ENCODE measurements at regions of chr1 and their contacts with region 1.

Region 1: GRCh38 chr1:1059494-1060280 is 14.4 kb downstream of the RNF223 start:
- DNase-seq: peak; percentile 86 to 95 (median 87)
- ATAC-seq: peak; percentile 66 to 94 (median 86)
- H3K4me3 ChIP-seq: peak overlapping the region; percentile 37 to 70 (median 58)
- H3K27ac ChIP-seq: peak overlapping the region in 1 of 12 donors; percentile 24
- H3K4me1 ChIP-seq: peaks cover 0 to 42% (median 18%) of the 10 kb centered on the region in 12 donors
- H3K27me3 ChIP-seq: peaks cover 28 to 69% (median 46%) of the 10 kb centered on the region in 9 donors
- CTCF ChIP-seq: peak in 2 of 12 donors; percentile 4
- POLR2A ChIP-seq: no peak

Region 2: DNA sequence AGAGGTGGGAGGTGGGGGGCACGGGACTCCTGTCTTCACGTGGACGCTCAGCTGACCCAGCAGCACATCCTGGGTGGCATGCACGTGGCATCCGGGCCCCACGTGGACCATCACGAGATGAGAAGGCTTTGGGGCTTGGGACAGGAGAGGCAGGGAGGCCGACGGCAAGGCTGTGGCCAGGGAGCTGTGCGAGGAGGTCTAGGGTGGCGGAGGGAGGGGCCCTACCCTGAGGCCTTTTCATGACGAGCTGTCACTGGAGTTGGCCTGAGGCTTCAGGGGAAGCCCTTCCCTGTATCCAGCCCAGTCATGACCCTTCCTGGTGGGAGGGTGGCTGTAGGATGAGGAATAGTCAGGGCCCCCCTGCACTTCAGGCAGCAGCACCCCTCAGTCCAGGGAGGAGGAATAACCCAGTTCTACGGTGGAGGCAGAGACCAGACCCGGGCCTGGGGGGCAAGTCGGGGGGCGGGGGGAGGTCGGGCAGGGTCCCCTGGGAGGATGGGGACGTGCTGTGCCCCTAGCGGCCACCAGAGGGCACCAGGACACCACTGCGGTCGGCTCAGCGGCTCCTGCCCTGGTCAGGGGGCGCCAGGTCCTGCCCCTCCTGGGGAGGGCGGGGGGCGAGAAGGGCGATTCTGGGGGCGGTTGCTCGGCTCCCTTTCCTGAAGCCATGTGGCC is 75.8 kb before region 1 on chr1:
- intact Hi-C with region 1: loop called (anchors 1 to 5 kb)
- DNase-seq: peak; percentile 44 to 75 (median 60)
- ATAC-seq: no peak
- H3K4me3 ChIP-seq: peak overlapping the region in 6 of 12 donors; percentile 10 to 45 (median 28)
- H3K27ac ChIP-seq: peak overlapping the region in 3 of 12 donors; percentile 13 to 98 (median 19)
- H3K4me1 ChIP-seq: peaks cover 0 to 34% (median 2%) of the 10 kb centered on the region in 12 donors
- H3K27me3 ChIP-seq: peaks cover 0 to 12% (median 0%) of the 10 kb centered on the region in 9 donors
- CTCF ChIP-seq: peak; percentile 87 to 98 (median 92)
- POLR2A ChIP-seq: no peak

Region 3: GRCh38 chr1:1019122-1019999 is 40.3 kb before region 1 on chr1:
- intact Hi-C with region 1: loop called in 4 of 10 experiments (anchors 5 kb)
- DNase-seq: peak; percentile 86 to 93 (median 88)
- ATAC-seq: peak; percentile 51 to 91 (median 86)
- H3K4me3 ChIP-seq: peak overlapping the region; percentile 59 to 99 (median 81)
- H3K27ac ChIP-seq: peak overlapping the region; percentile 88 to 99 (median 96)
- H3K4me1 ChIP-seq: peaks cover 2 to 43% (median 34%) of the 10 kb centered on the region in 12 donors
- H3K27me3 ChIP-seq: peaks cover 0 to 10% (median 0%) of the 10 kb centered on the region in 9 donors
- CTCF ChIP-seq: peak in 11 of 12 donors; percentile 36 to 66 (median 55)
- POLR2A ChIP-seq: no peak

Region 4: DNA sequence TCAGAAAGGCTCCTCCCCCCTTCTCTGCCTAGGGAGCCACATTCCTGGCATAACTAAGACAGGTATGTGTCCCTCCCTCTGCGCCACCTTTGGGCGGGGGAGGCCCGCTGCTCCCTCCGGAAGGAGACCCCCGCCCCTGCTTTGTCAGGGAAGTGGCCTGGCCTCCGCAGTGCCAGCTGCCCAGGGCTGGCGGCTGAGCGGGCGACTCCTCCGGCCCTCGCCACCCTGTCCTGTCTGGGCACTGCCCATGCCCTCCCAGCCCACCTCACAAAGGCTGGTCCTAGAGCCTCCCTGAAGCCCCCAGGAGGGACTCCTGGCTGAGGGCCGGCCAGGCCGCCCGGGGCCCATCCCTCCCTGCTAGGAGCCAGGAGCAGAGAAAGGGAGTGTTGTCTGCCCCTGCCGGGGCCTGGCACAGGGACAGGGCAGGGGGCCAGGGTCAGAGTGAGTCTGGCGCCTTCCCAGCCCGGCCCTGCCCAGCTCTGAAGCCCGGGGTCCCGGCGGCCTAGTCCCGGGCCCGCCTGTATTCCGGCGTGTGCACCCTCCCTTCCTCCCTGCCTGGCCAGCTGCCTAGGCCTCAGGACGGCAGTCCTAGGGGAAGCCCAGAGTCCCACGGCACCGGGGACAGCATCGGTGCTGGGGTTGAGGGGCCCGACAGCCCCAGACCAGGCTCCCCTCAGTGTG is 34.8 kb before region 1 on chr1:
- intact Hi-C with region 1: loop called in 4 of 10 experiments (anchors 5 kb)
- DNase-seq: no peak
- ATAC-seq: peak in 3 of 4 donors; percentile 9 to 62 (median 17)
- H3K4me3 ChIP-seq: peak overlapping the region in 6 of 12 donors; percentile 0 to 34 (median 20)
- H3K27ac ChIP-seq: peak overlapping the region in 7 of 12 donors; percentile 6 to 73 (median 34)
- H3K4me1 ChIP-seq: peaks cover 0 to 60% (median 35%) of the 10 kb centered on the region in 12 donors
- H3K27me3 ChIP-seq: peaks cover 0 to 10% (median 0%) of the 10 kb centered on the region in 9 donors
- CTCF ChIP-seq: no peak
- POLR2A ChIP-seq: no peak

Region 5: DNA sequence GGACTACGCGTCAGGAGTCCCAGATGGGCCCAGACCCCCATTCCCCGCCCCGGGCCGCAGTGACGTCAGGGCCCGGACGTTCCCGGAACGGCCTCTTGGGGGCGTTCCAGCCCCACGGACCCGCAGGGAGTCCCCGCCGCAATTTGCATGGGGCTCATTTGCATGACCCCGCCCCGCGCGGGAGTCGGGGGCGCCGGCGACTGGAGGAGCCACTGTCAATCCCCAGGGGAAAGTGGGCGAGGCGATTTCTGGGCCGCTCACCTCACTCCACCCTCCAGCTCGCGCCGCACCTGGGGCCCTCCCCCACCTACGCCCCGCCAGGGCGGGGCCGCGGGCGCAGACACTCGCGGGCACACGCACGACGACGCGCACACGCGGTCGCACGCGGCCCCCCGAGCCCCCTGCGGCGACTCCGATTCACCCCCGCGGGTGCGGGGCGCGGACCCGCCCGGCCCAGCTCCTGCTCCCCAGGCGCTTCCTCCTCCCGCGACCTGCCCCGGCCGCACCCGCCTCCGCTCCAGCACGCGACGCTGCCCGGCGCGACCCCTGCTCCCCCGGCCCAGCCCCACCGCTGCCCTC is 26.6 kb before region 1 on chr1:
- intact Hi-C with region 1: loop called in 2 of 10 experiments (anchors 2 to 5 kb)
- DNase-seq: peak; percentile 75 to 87 (median 84)
- ATAC-seq: peak; percentile 55 to 89 (median 80)
- H3K4me3 ChIP-seq: peak overlapping the region; percentile 7 to 61 (median 50)
- H3K27ac ChIP-seq: no peak overlapping the region
- H3K4me1 ChIP-seq: peaks cover 3 to 26% (median 14%) of the 10 kb centered on the region in 12 donors
- H3K27me3 ChIP-seq: peaks cover 0 to 47% (median 0%) of the 10 kb centered on the region in 9 donors
- CTCF ChIP-seq: peak; percentile 62 to 79 (median 66)
- POLR2A ChIP-seq: peak in 1 of 2 donors; percentile 6

Region 6: DNA sequence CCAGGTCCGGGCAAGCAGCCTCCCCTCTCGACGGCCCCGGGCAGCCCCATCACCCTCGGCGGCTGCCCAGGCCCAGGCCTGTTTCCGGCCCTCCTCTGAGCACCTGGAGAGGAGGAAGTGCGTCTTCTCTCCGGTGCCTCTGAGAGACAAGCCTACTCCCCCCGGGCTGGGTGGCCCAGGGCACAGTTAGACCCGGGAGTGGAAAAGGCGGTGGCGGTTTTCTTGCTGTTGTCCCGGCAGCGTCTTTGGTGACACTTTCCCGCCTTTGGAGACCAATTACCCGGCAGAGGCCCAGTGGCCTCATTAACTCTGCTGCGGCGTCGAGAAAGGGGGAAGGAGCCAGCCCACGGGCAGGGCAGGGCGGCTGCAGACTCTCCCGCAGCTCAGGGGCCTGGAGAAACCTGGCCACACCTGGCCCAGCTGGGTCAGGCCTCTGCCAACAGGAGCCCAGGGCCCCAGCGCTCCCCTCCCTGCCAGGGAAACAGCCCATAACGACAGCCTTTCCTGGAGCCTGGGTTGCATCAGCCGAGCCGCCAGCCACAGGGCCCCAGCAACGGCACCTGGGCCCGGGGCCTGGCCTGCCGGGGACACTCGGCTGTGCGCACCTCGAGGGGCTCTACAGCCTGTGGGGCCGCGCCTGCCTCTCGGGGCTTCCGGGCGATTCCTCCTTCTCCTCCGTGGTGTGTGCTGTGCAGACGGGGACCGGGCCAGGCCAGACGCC is 84.6 kb after region 1 on chr1:
- intact Hi-C with region 1: no loop called
- DNase-seq: no peak
- ATAC-seq: no peak
- H3K4me3 ChIP-seq: no peak overlapping the region
- H3K27ac ChIP-seq: peak overlapping the region in 1 of 12 donors; percentile 62
- H3K4me1 ChIP-seq: peaks cover 0 to 6% (median 0%) of the 10 kb centered on the region in 12 donors
- H3K27me3 ChIP-seq: peaks cover 0 to 19% (median 11%) of the 10 kb centered on the region in 9 donors
- CTCF ChIP-seq: no peak
- POLR2A ChIP-seq: no peak